Endothelial cell of umbilical vein (primary cell): ENCODE measurements at regions of chrX and their contacts with region 1.

Region 1: GRCh38 chrX:102672856-102673255 is 21.6 kb downstream of the GPRASP1 start:
- DNase-seq: no peak
- H3K4me3 ChIP-seq: no peak overlapping the region
- H3K27ac ChIP-seq: no peak overlapping the region
- H3K4me1 ChIP-seq: peaks cover 8% of the 10 kb centered on the region
- H3K27me3 ChIP-seq: no peaks in the 10 kb centered on the region
- CTCF ChIP-seq: no peak
- POLR2A ChIP-seq: no peak

Region 2: DNA sequence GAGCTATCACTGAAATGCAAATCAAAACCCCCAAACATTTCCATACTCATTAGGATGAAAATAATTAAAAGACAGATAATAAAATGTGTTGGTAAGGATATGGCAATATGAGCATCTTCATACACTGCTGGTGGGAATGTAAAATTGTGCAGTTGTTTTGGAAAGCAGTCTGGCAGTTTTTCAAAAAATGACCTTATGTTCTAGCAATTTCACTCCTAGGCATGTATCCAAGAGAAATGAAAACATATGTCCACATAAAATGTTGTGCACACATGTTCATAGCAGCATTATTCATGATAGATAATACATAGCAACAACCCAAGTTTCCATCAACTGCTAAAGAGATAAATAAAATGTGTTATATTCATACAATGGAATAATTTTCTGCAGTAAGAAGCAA is 24.6 kb after region 1 on chrX:
- CTCF ChIA-PET with region 1: interaction called, 3 read pairs
- POLR2A ChIA-PET with region 1: no interaction called
- dilution Hi-C with region 1: no loop called
- intact Hi-C with region 1: loop called (anchors 2 kb)
- DNase-seq: peak; percentile 35
- H3K4me3 ChIP-seq: no peak overlapping the region
- H3K27ac ChIP-seq: no peak overlapping the region
- H3K4me1 ChIP-seq: no peaks in the 10 kb centered on the region
- H3K27me3 ChIP-seq: no peaks in the 10 kb centered on the region
- CTCF ChIP-seq: no peak
- POLR2A ChIP-seq: no peak

Region 3: GRCh38 chrX:102712952-102713625 is 40.2 kb after region 1 on chrX:
- CTCF ChIA-PET with region 1: no interaction called
- POLR2A ChIA-PET with region 1: no interaction called
- dilution Hi-C with region 1: no loop called
- intact Hi-C with region 1: loop called (anchors 5 kb)
- DNase-seq: peak; percentile 58
- H3K4me3 ChIP-seq: peak overlapping the region; percentile 51 to 73 (median 53)
- H3K27ac ChIP-seq: no peak overlapping the region
- H3K4me1 ChIP-seq: no peaks in the 10 kb centered on the region
- H3K27me3 ChIP-seq: peaks cover 3% of the 10 kb centered on the region in 2 experiments
- CTCF ChIP-seq: peak; percentile 38 to 54
- POLR2A ChIP-seq: no peak